Right cardiac atrium (tissue), 5 donors: ENCODE measurements at regions of chr2 and their contacts with region 1.

Region 1: GRCh38 chr2:238945433-238946150 is 97.7 kb downstream of the TWIST2 start:
- DNase-seq: peak; percentile 65 to 91 (median 86)
- ATAC-seq: peak; percentile 85 to 86
- H3K4me3 ChIP-seq: no peak overlapping the region
- H3K27ac ChIP-seq: no peak overlapping the region
- H3K4me1 ChIP-seq: peaks cover 2% of the 10 kb centered on the region
- H3K27me3 ChIP-seq: no peaks in the 10 kb centered on the region

Region 2: GRCh38 chr2:238847841-238848690 is 97.5 kb before region 1 on chr2 and contains the start of gene TWIST2:
- intact Hi-C with region 1: loop called in 1 of 4 experiments (anchors 10 kb)
- DNase-seq: peak; percentile 90 to 95 (median 93)
- ATAC-seq: peak; percentile 91 to 93
- H3K4me3 ChIP-seq: peak within 1 kb of the TSS; percentile 61
- H3K27ac ChIP-seq: peak within 1 kb of the TSS; percentile 70
- H3K4me1 ChIP-seq: no peaks in the 10 kb centered on the region
- H3K27me3 ChIP-seq: no peaks in the 10 kb centered on the region
- total RNA-seq, gene TWIST2: 3.1 to 5.5 (median 4.8) TPM